Head of caudate nucleus (tissue), 42 donors: ENCODE measurements at regions of chr14 and their contacts with region 1.

Region 1: DNA sequence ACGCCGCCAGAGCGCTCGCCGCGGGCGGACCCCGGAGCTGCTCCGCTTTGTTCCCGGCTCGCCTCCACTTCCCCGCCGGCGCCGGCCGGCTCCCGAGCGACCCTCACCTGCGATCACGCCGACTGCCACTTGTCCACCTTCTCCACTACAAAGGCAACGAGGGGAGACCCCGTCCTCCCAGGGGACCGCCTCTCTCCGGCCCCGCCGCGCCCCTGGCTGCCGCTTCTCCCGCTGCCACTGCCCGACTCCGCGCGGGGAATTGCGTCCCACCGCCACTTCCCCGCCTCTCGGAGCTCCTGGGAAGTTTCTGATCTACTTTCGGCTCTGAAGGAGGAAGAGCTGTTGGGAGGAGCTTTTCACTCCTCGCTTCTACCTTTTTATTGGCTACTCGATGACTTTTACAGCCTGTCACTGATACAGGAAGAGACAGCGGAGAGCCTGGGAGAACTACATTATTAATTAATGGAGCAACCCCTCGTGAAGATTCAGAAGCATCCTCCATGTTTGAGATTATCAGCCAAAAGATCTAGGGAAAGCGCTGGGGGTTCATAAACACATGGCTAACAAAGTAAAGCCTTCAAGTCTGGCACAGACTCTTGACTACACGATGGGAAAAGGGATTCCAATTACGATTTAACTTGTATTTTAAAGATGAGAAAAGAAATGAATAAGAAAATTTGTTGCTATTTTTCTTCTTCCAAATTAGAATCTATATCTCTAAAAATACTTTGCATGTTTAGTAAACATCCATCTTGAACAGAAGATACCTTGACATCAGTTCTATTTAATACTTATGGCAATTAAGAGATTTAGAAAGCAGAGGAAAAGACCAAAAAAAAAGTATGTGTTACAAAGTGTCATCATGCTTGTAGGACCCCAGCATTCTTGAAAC is at the start of gene BAZ1A:
- DNase-seq: peak in 40 of 42 donors; percentile 16 to 84 (median 66)

Region 2: DNA sequence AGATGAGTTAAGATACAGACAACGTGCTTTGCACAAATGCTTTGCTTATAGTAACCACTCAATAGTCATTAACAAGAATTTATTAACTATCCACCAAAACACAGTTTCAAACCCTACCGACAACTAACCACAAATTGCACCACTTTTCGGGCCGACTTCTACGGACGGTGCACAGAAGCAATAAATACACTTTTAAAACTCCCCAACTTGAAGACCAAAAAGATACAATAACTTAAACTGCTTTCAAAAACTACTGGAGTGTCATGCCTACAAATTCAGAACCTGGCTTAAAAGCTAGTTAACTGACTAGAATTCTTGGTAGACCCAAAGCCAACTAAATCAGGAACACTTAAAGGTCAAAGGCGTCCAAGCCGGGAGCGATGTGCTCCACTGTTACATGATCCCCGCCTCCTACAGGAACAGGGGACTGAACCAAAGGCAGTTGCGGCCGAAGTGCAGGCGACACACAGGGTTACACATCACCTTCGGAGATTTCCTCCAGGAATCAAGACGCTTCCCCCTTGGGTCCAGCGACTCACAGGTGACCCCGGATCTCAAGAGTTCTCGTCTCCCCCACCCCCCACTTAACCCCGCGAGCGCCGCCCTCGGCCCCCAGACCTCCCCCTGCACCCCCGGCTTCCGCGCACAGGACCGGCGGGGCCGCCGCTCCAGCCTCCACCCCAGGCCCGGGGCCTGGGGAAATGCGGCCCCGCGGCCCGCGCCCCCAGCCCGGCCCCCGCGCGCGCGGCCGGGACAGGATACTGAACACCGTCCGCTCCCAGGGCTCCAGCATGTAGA is 413.7 kb before region 1 on chr14:
- intact Hi-C with region 1: no loop called
- DNase-seq: peak in 40 of 42 donors; percentile 10 to 74 (median 39)

Region 3: GRCh38 chr14:34714320-34715126 is 160.8 kb before region 1 on chr14 and contains the start of gene CFL2:
- intact Hi-C with region 1: loop called (anchors 10 kb)
- DNase-seq: peak; percentile 81 to 97 (median 93)

Region 4: GRCh38 chr14:35046048-35046741 is 170.9 kb after region 1 on chr14 and contains the start of gene FAM177A1:
- intact Hi-C with region 1: loop called (anchors 10 kb)
- DNase-seq: peak; percentile 96 to 99 (median 98)